ENCODE measurements at regions of chr1 and their contacts with region 1.

Region 1: GRCh38 chr1:169893494-169894362 is at the start of gene SCYL3:
- DNase-seq: peak; percentile 85 to 97 (median 95)
- ATAC-seq: peak; percentile 92
- H3K4me3 ChIP-seq: peak within 1 kb of the TSS; percentile 77
- H3K4me3 Mint-ChIP-seq: peak within 1 kb of the TSS; percentile 85 to 97 (median 94)
- H3K27ac ChIP-seq: peak within 1 kb of the TSS; percentile 95
- H3K27ac Mint-ChIP-seq: peak within 1 kb of the TSS; percentile 98 to 100 (median 100)
- H3K4me1 ChIP-seq: peaks cover 25 to 28% of the 10 kb centered on the region in 2 donors
- H3K4me1 Mint-ChIP-seq: peaks cover 26 to 51% (median 46%) of the 10 kb centered on the region in 7 donors
- H3K27me3 ChIP-seq: no peaks in the 10 kb centered on the region
- H3K27me3 Mint-ChIP-seq: peaks cover 0 to 18% (median 4%) of the 10 kb centered on the region in 5 donors
- total RNA-seq, gene SCYL3: 9.5 to 22.7 (median 17.3) TPM

Region 2: GRCh38 chr1:169485544-169486278 is 408.0 kb before region 1 on chr1 and contains the start of gene SLC19A2:
- CTCF ChIA-PET with region 1: no interaction called
- POLR2A ChIA-PET with region 1: no interaction called
- intact Hi-C with region 1: loop called (anchors 1 to 2 kb)
- DNase-seq: peak; percentile 79 to 94 (median 89)
- ATAC-seq: peak; percentile 99
- H3K4me3 ChIP-seq: peak within 1 kb of the TSS; percentile 66
- H3K4me3 Mint-ChIP-seq: peak within 1 kb of the TSS; percentile 87 to 98 (median 94)
- H3K27ac ChIP-seq: peak within 1 kb of the TSS; percentile 81
- H3K27ac Mint-ChIP-seq: peak within 1 kb of the TSS; percentile 86 to 98 (median 94)
- H3K4me1 ChIP-seq: peaks cover 4 to 12% of the 10 kb centered on the region in 2 donors
- H3K4me1 Mint-ChIP-seq: peaks cover 35 to 56% (median 46%) of the 10 kb centered on the region in 7 donors
- H3K27me3 ChIP-seq: no peaks in the 10 kb centered on the region
- H3K27me3 Mint-ChIP-seq: peaks cover 0 to 8% (median 0%) of the 10 kb centered on the region in 5 donors
- total RNA-seq, gene SLC19A2: 3.7 to 5.9 (median 4.8) TPM

Region 3: GRCh38 chr1:169694304-169695075 is 199.2 kb before region 1 on chr1:
- CTCF ChIA-PET with region 1: no interaction called
- POLR2A ChIA-PET with region 1: no interaction called
- intact Hi-C with region 1: loop called (anchors 2 to 5 kb)
- DNase-seq: peak in 7 of 9 donors; percentile 63 to 85 (median 76)
- ATAC-seq: peak; percentile 71
- H3K4me3 ChIP-seq: peak overlapping the region; percentile 18
- H3K4me3 Mint-ChIP-seq: peak overlapping the region in 9 of 10 donors; percentile 21 to 86 (median 71)
- H3K27ac ChIP-seq: peak overlapping the region; percentile 70
- H3K27ac Mint-ChIP-seq: peak overlapping the region in 4 of 9 donors; percentile 86 to 98 (median 94)
- H3K4me1 ChIP-seq: peaks cover 91 to 92% of the 10 kb centered on the region in 2 donors
- H3K4me1 Mint-ChIP-seq: peaks cover 0 to 89% (median 74%) of the 10 kb centered on the region in 7 donors
- H3K27me3 ChIP-seq: no peaks in the 10 kb centered on the region
- H3K27me3 Mint-ChIP-seq: no peaks in the 10 kb centered on the region

Region 4: GRCh38 chr1:169906938-169907337 is 13.2 kb after region 1 on chr1:
- CTCF ChIA-PET with region 1: no interaction called
- POLR2A ChIA-PET with region 1: interaction called, 10 read pairs
- intact Hi-C with region 1: loop called in 1 of 2 experiments (anchors 1 kb)
- DNase-seq: no peak
- ATAC-seq: no peak
- H3K4me3 ChIP-seq: no peak overlapping the region
- H3K4me3 Mint-ChIP-seq: no peak overlapping the region
- H3K27ac ChIP-seq: no peak overlapping the region
- H3K27ac Mint-ChIP-seq: no peak overlapping the region
- H3K4me1 ChIP-seq: peaks cover 0 to 15% of the 10 kb centered on the region in 2 donors
- H3K4me1 Mint-ChIP-seq: peaks cover 20 to 33% (median 26%) of the 10 kb centered on the region in 7 donors
- H3K27me3 ChIP-seq: no peaks in the 10 kb centered on the region
- H3K27me3 Mint-ChIP-seq: peaks cover 0 to 8% (median 0%) of the 10 kb centered on the region in 5 donors

Region 5: DNA sequence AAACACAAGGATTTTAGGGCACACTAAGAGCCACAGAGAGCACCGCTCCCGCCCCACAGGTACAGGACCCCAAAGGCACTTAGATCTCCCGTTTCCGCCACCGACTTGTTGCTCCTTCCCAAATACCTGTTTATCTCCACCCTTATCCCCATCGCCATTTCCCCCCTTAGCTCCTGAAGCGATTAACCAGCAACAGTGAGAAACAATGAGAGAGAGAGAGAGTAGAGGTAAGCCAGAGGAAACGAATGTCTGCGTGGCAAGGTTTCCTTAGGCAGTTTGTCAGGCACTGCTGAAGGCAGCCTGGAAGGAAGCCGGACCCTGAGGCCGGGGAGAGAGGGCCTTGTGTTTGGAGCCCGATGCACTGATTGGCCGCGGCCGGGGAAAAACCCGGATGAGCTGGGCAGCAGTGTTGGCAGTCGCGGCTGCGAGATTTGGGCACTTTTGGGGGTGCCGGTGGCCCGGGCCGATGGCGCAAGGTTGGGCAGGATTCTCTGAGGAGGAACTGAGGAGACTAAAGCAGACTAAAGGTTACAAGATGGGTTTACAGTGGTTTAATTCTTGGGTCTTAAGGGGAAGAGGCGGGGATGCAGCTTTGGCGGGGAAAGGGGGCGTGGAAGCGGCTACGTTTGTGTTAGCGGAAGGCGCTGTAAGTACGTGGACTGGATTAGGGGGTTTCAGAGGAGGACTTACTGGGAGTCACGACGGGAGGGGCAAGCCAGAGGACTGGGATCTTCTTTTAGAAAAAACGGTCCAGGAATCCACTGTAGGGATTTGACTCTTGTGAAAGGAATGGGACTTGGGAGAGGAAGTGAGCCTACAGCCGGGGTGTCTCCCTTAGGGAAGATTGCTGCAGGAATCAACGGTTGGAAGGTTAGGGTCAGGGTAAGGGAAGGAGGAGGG is 638.3 kb after region 1 on chr1 and contains the start of gene GORAB:
- CTCF ChIA-PET with region 1: no interaction called
- POLR2A ChIA-PET with region 1: interaction called, 10 read pairs
- intact Hi-C with region 1: loop called (anchors 1 kb)
- DNase-seq: peak; percentile 74 to 87 (median 83)
- ATAC-seq: peak; percentile 97
- H3K4me3 ChIP-seq: peak within 1 kb of the TSS; percentile 95
- H3K4me3 Mint-ChIP-seq: no peak within 1 kb of the TSS
- H3K27ac ChIP-seq: peak within 1 kb of the TSS; percentile 91
- H3K27ac Mint-ChIP-seq: peak within 1 kb of the TSS in 1 of 9 donors; percentile 36
- H3K4me1 ChIP-seq: peaks cover 8 to 14% of the 10 kb centered on the region in 2 donors
- H3K4me1 Mint-ChIP-seq: peaks cover 7 to 29% (median 19%) of the 10 kb centered on the region in 7 donors
- H3K27me3 ChIP-seq: no peaks in the 10 kb centered on the region
- H3K27me3 Mint-ChIP-seq: peaks cover 0 to 20% (median 0%) of the 10 kb centered on the region in 5 donors
- total RNA-seq, gene GORAB: 10.9 to 25.3 (median 22.7) TPM

Region 6: DNA sequence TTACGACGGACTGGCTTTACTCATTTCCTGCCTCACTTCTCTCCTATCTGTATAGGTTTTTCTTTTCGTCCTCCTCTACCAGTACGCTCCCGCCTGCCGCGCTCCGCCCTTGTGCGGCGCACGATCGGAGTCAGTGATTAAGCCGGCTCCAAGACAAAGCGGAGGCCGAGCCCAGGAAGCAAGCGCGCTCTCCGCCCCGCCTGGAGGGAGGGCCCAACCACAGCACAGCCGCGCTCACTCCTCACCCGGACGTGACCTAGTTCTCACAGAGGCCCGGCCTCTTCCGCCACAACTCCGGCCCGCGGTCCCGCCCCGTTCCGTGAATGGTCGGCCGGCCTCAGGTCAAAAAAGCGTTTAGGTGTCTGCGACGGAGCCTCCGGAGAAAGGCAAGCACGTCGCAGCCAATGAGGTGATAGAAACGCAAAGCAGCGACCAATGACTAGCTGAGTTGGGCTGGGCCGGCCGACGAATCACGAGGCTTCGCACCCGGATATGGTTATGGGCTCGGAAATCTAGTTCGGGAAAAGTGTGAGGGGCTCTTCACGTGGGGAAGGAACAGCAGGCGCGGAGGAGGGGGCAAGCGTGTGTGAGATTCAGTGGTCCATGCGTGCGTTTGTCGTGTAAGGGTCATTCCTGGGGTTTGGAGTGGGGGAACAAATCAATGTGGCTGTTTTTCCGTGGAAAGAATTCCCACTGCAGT is 1887.6 kb after region 1 on chr1 and contains the start of gene METTL13:
- CTCF ChIA-PET with region 1: no interaction called
- POLR2A ChIA-PET with region 1: interaction called, 4 read pairs
- intact Hi-C with region 1: loop called (anchors 1 to 5 kb)
- DNase-seq: peak; percentile 89 to 100 (median 99)
- ATAC-seq: peak; percentile 95
- H3K4me3 ChIP-seq: peak within 1 kb of the TSS; percentile 95
- H3K4me3 Mint-ChIP-seq: peak within 1 kb of the TSS; percentile 90 to 99 (median 94)
- H3K27ac ChIP-seq: peak within 1 kb of the TSS; percentile 74
- H3K27ac Mint-ChIP-seq: peak within 1 kb of the TSS; percentile 93 to 99 (median 96)
- H3K4me1 ChIP-seq: peaks cover 20 to 41% of the 10 kb centered on the region in 2 donors
- H3K4me1 Mint-ChIP-seq: peaks cover 28 to 65% (median 58%) of the 10 kb centered on the region in 7 donors
- H3K27me3 ChIP-seq: no peaks in the 10 kb centered on the region
- H3K27me3 Mint-ChIP-seq: no peaks in the 10 kb centered on the region
- total RNA-seq, gene METTL13: 15.6 to 50.7 (median 34.5) TPM

Measured in naive thymus-derived CD4-positive, alpha-beta T cell (primary cell).